B cell (primary cell): ENCODE measurements at regions of chr1 and their contacts with region 1.

Region 1: GRCh38 chr1:203603940-203604591 is 22.6 kb upstream of the ATP2B4 start:
- DNase-seq: no peak
- ATAC-seq: no peak
- H3K4me3 ChIP-seq: no peak overlapping the region
- H3K4me3 Mint-ChIP-seq: no peak overlapping the region
- H3K27ac ChIP-seq: no peak overlapping the region
- H3K27ac Mint-ChIP-seq: no peak overlapping the region
- H3K4me1 ChIP-seq: peaks cover 0 to 5% of the 10 kb centered on the region in 2 donors
- H3K4me1 Mint-ChIP-seq: peaks cover 4% of the 10 kb centered on the region
- H3K27me3 ChIP-seq: no peaks in the 10 kb centered on the region
- H3K27me3 Mint-ChIP-seq: peaks cover 4% of the 10 kb centered on the region
- CTCF ChIP-seq: no peak

Region 2: GRCh38 chr1:203581841-203582240 is 22.2 kb before region 1 on chr1:
- CTCF ChIA-PET with region 1: no interaction called
- POLR2A ChIA-PET with region 1: no interaction called
- intact Hi-C with region 1: no loop called
- DNase-seq: no peak
- ATAC-seq: no peak
- H3K4me3 ChIP-seq: no peak overlapping the region
- H3K4me3 Mint-ChIP-seq: no peak overlapping the region
- H3K27ac ChIP-seq: no peak overlapping the region
- H3K27ac Mint-ChIP-seq: no peak overlapping the region
- H3K4me1 ChIP-seq: no peaks in the 10 kb centered on the region
- H3K4me1 Mint-ChIP-seq: no peaks in the 10 kb centered on the region
- H3K27me3 ChIP-seq: no peaks in the 10 kb centered on the region
- H3K27me3 Mint-ChIP-seq: peaks cover 23% of the 10 kb centered on the region
- CTCF ChIP-seq: no peak

Region 3: GRCh38 chr1:203593723-203594122 is 10.3 kb before region 1 on chr1:
- CTCF ChIA-PET with region 1: interaction called, 11 read pairs
- POLR2A ChIA-PET with region 1: no interaction called
- intact Hi-C with region 1: no loop called
- DNase-seq: peak; percentile 48
- ATAC-seq: peak; percentile 45
- H3K4me3 ChIP-seq: no peak overlapping the region
- H3K4me3 Mint-ChIP-seq: no peak overlapping the region
- H3K27ac ChIP-seq: no peak overlapping the region
- H3K27ac Mint-ChIP-seq: no peak overlapping the region
- H3K4me1 ChIP-seq: no peaks in the 10 kb centered on the region
- H3K4me1 Mint-ChIP-seq: no peaks in the 10 kb centered on the region
- H3K27me3 ChIP-seq: peaks cover 0 to 3% (median 1%) of the 10 kb centered on the region in 4 experiments
- H3K27me3 Mint-ChIP-seq: peaks cover 17% of the 10 kb centered on the region
- CTCF ChIP-seq: peak; percentile 52